SK-N-SH (cell line): ENCODE measurements at regions of chr10 and their contacts with region 1.

Region 1: DNA sequence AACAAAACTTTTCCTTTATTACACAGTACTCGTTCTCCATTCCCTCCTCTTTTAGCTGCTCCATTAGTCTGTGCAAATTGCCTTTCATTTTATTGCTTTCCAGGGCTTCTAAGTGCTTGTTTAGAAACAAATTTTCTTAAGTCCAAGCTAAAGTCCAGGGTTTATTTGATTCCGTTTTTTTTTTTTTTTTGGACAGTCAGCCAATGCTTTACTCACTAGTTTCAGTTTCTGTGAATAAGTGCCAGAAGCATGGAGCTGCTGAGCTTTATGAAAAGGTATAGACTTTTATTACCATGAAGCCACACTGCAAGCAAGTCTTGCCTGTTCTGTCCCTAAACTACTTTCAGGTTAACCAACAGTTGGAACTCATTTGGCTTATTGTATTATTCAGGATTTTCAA is 455.0 kb downstream of the GFRA1 start:
- DNase-seq: no peak
- H3K4me3 ChIP-seq: peak overlapping the region in 1 of 2 experiments; percentile 12; a peak in 1 of 4 replicates
- H3K27ac ChIP-seq: no peak overlapping the region
- H3K4me1 ChIP-seq: no peaks in the 10 kb centered on the region
- H3K27me3 ChIP-seq: no peaks in the 10 kb centered on the region
- CTCF ChIP-seq: no peak
- EP300 ChIP-seq: no peak
- RAD21 ChIP-seq: no peak

Region 2: DNA sequence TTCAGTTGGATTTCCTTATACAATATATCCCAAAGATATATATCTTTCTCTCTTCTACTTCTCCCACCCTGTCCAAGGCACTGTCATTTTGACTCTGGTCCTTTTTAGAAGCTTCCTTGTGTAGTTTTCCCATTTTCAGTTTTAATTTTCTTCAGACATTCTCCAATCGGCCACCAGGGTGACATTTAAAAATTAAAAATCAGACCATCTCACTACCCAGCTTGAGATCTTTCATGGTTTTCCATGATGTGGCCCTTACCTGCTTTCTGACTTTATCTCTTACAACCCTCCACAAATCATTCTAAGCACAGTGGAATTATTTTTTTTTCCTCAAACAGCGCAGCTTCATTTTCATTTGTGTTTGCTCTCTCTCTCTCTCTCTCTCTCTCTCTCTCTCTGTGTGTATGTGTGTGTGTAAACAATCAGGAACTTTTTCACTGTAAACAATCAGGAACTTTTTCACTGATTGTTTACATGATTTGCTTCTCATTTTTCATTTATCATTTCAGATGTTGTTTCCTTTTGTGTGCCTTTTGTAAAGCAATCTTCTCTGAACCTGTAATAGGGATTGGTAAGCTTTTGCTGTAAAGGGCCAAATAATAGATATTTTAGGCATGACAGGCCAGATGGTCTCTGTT is 376.0 kb before region 1 on chr10:
- CTCF ChIA-PET with region 1: no interaction called
- POLR2A ChIA-PET with region 1: no interaction called
- DNase-seq: no peak
- H3K4me3 ChIP-seq: no peak overlapping the region
- H3K27ac ChIP-seq: no peak overlapping the region
- H3K4me1 ChIP-seq: no peaks in the 10 kb centered on the region
- H3K27me3 ChIP-seq: no peaks in the 10 kb centered on the region
- CTCF ChIP-seq: peak; percentile 33; the same call in 1 of the 2 replicates
- EP300 ChIP-seq: no peak
- RAD21 ChIP-seq: no peak

Region 3: DNA sequence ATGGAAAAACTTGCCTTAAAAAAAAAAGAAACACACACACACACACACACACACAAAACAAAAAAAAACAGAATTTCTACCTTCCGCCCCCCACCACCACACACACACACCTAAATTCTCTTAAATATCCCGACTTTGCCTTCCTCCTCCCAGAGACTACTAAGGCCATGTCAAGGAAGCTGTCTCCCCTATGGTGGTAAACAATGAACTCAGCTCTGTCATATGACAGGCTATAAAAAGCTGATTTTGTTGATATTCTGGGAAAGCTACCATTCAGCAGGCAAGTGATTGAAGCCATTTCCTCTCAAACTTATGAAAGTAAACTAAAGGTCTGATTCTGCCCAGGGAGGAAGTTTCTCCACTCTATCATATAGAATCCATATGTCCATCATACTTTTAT is 16.0 kb before region 1 on chr10:
- CTCF ChIA-PET with region 1: interaction called, 15 read pairs
- POLR2A ChIA-PET with region 1: no interaction called
- DNase-seq: no peak
- H3K4me3 ChIP-seq: no peak overlapping the region
- H3K27ac ChIP-seq: no peak overlapping the region
- H3K4me1 ChIP-seq: no peaks in the 10 kb centered on the region
- H3K27me3 ChIP-seq: no peaks in the 10 kb centered on the region
- CTCF ChIP-seq: no peak
- EP300 ChIP-seq: no peak
- RAD21 ChIP-seq: no peak